Prostate gland (tissue), 2 donors: ENCODE measurements at regions of chr18 and their contacts with region 1.

Region 1: DNA sequence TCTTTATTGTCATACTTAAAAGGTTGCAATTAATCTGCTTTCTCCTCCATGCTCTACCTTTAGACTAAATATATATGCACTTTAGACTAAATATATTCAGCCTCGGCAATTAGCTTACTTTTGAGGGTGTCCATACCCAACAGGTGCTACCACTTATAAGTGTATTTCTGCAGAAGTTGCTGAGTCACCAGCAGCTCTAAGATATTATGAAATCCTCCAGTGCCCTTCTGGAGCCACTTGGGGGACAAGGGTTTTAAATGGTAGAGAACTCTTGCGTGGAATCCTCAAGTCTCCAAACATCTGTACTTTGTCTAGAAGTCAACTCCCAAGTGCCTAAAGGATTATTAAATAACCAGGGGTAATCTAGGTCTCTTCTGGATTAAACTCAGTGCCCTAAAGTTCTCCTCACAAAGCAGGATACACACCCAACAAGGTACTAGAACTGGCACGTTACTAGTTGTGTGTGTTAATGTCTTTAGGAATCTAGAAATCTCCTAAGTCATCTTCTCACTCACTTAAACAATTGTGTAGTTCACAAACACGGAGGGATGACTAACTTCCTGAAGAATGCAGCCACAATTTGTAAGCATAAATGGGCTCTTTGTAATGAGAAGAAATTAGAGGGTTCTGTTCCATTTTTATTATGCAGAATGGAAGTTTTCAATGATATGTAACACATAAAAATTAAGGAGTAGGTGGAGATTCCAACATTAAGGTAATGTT is 159.7 kb downstream of the CD226 start:
- DNase-seq: no peak
- H3K4me3 ChIP-seq: no peak overlapping the region
- H3K27ac ChIP-seq: no peak overlapping the region
- H3K4me1 ChIP-seq: no peaks in the 10 kb centered on the region
- H3K27me3 ChIP-seq: no peaks in the 10 kb centered on the region
- CTCF ChIP-seq: no peak
- POLR2A ChIP-seq: no peak

Region 2: GRCh38 chr18:69814861-69815385 is 26.9 kb after region 1 on chr18:
- intact Hi-C with region 1: loop called (anchors 2 kb)
- DNase-seq: no peak
- H3K4me3 ChIP-seq: no peak overlapping the region
- H3K27ac ChIP-seq: no peak overlapping the region
- H3K4me1 ChIP-seq: no peaks in the 10 kb centered on the region
- H3K27me3 ChIP-seq: no peaks in the 10 kb centered on the region
- CTCF ChIP-seq: no peak
- POLR2A ChIP-seq: no peak